Activated CD8-positive, alpha-beta T cell treated with anti-CD3 and anti-CD28 coated beads, Interleukin-2, amount 10 ng/mL, durations not matched to agents 7 days and 5 days (primary cell): ENCODE measurements at regions of chr12 and their contacts with region 1.

Region 1: GRCh38 chr12:104456417-104456949 is at the start of gene CHST11:
- DNase-seq: peak; percentile 81
- ATAC-seq: peak; percentile 71
- H3K4me3 Mint-ChIP-seq: peak within 1 kb of the TSS; percentile 99
- H3K27ac Mint-ChIP-seq: peak within 1 kb of the TSS; percentile 96
- H3K4me1 Mint-ChIP-seq: peaks cover 41% of the 10 kb centered on the region
- H3K27me3 Mint-ChIP-seq: peaks cover 2% of the 10 kb centered on the region
- total RNA-seq, gene CHST11: 82.1 to 85.2 TPM

Region 2: DNA sequence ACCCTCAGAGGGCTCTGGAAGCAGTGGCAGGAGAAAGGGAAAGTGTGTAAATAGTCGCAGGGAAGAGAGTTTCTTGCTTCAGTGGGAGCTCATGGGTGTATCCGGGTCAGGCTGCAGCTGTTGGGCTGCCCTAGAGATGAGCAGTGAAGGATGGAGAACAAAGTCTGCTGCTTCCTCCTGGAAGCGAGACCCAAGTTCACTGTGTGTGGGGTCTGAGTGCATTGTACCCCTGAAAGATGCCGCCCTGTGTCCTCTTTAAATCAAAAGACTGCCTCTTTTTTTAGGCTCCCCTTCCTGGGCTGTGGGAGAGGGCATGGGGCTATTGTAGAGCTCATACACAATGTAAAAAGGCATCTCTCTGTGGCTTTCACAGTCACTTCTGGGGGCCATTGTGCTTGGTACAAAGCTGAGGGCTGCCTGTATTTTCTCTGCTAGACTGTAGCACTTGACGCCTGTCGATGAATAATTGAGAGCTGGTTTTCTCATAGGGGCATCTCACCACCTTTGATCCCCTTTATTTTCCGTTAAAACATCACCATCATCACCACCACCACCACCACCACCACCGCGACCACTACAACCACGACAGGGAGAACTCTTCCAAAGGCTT is 17.0 kb after region 1 on chr12:
- CTCF ChIA-PET with region 1: interaction called, 43 read pairs
- POLR2A ChIA-PET with region 1: interaction called, 68 read pairs
- DNase-seq: peak; percentile 48
- ATAC-seq: peak; percentile 48
- H3K4me3 Mint-ChIP-seq: peak overlapping the region; percentile 69
- H3K27ac Mint-ChIP-seq: peak overlapping the region; percentile 91
- H3K4me1 Mint-ChIP-seq: peaks cover 88% of the 10 kb centered on the region
- H3K27me3 Mint-ChIP-seq: no peaks in the 10 kb centered on the region

Region 3: DNA sequence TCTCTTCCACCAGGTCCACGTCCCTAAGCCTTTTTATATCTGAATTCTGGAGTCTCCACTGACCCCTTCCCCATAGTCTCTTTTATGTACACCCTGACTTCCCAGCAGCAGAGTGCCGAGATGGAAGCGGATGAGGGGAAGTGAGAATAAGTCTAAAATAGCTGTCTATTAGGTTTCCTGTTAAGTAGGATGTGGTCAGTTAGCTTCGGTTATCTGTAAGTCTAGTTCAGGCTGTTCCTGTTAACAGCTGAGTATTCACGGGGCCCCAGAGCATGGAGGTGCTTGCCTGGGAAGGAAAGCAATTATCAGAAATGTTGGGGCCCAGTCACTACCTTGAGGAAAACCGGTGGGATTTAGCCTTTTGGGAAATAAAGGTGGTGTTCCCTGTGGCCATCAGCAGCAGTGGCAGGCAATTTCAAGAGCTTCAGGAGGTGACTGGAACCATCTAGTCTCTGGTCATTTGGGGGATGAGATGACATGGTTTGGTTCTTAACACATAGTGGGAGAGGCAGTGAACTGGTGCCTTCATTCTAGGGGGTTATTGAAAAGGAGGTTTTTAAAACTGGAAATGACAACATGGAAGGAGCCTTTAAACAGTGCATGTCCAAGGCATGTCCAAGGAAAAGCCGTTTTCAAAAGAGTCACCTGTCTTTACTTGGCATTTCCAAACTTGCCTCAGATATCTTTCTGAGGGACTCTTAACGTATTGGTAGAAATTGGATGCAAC is 22.1 kb after region 1 on chr12:
- CTCF ChIA-PET with region 1: interaction called, 43 read pairs
- POLR2A ChIA-PET with region 1: interaction called, 68 read pairs
- DNase-seq: peak; percentile 45
- ATAC-seq: peak; percentile 70
- H3K4me3 Mint-ChIP-seq: peak overlapping the region; percentile 82
- H3K27ac Mint-ChIP-seq: peak overlapping the region; percentile 94
- H3K4me1 Mint-ChIP-seq: peaks cover 89% of the 10 kb centered on the region
- H3K27me3 Mint-ChIP-seq: no peaks in the 10 kb centered on the region

Region 4: DNA sequence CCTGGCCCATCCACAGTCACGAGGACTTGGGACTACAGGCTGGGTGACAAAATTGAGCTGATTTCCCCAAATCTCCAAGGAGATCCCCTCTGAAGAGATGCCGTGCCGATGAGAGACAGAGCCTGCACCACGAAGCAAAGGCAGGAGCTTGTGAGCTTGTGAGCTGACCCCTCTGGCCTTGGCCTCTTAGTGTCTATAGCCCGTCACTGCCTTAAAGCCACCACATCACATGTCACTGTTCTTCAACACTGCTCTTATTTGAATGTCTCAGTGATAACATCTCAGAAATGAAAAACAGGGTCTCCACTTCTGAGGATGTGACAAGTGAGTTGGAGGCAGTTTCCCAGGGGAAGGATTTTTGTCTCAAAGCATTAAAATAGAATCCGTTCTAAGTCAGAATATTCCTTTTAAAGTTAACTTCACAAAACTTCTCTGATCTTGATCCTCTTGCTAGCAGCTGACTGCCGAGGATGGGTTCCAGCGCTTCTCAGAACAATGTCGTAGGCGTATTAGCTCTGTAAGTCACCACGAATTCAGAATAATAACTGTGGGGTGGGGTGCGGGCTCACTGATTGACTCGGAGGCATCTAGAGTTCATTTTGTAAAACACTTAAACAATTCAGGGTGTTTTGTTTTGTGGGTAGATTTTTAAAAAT is 37.8 kb after region 1 on chr12:
- CTCF ChIA-PET with region 1: interaction called, 29 read pairs
- POLR2A ChIA-PET with region 1: interaction called, 9 read pairs
- DNase-seq: peak; percentile 42
- ATAC-seq: peak; percentile 30
- H3K4me3 Mint-ChIP-seq: peak overlapping the region; percentile 63
- H3K27ac Mint-ChIP-seq: peak overlapping the region; percentile 80
- H3K4me1 Mint-ChIP-seq: peaks cover 90% of the 10 kb centered on the region
- H3K27me3 Mint-ChIP-seq: no peaks in the 10 kb centered on the region

Region 5: DNA sequence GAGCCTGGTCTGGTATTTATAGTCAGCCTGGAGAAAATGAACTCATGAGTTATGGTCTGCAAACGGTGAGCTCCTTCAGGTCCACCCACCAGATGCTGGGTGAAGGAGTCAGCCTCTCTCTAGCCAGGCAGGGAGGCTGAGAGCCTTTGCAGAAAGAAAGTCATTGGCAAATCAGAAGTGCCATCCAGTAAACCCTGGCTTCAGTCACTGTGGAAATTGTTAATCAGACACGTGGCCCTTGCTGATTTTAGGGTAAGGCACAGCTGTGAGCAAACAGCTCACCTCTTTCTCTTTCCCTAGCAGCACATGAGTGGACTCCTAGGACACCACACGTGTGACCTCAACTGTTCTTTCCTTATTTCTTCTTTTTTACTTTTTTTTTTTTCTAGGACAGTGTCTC is 45.2 kb after region 1 on chr12:
- CTCF ChIA-PET with region 1: interaction called, 12 read pairs
- POLR2A ChIA-PET with region 1: interaction called, 3 read pairs
- DNase-seq: no peak
- ATAC-seq: peak; percentile 23
- H3K4me3 Mint-ChIP-seq: no peak overlapping the region
- H3K27ac Mint-ChIP-seq: no peak overlapping the region
- H3K4me1 Mint-ChIP-seq: peaks cover 94% of the 10 kb centered on the region
- H3K27me3 Mint-ChIP-seq: no peaks in the 10 kb centered on the region

Region 6: DNA sequence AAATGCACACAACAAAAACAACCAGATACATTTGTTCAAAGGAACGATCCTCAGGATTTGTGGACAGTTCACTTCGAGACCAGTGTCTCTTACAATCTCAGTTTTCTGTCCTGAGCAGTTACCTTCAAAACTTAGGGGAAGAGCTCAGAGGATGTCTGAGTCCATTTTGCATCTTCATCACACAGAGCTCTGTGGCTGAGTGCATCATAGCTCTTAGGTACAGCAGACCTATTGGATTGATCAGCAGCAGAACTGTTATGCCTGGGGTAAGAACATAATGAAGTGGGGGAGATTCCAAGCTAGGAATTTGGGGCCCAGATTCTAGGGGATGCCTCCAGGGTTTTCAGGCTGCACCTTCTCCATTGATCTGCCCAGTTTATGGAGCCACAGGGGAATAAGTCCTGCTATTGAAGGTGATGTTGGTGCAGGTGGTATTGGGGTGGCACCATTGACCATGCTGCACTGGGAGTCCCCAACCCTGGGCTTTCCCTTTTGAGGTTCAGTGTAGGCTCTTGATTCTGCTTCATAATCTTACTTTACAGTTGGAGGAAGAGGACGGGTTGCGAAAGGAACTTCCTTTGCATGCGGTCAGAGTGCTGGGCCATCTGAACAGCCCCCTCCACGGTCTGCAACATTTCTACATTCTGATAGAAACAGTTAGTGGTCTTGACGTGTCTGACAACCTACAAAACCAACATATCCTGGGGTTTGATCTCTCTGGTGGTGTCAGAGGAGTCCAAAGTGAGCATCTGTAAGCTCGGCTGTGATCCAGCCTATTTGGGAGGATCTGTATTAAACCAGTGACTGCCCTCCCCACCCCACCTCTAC is 113.1 kb after region 1 on chr12:
- CTCF ChIA-PET with region 1: interaction called, 37 read pairs
- POLR2A ChIA-PET with region 1: interaction called, 33 read pairs
- DNase-seq: peak; percentile 87
- ATAC-seq: peak; percentile 83
- H3K4me3 Mint-ChIP-seq: peak overlapping the region; percentile 45
- H3K27ac Mint-ChIP-seq: peak overlapping the region; percentile 86
- H3K4me1 Mint-ChIP-seq: peaks cover 71% of the 10 kb centered on the region
- H3K27me3 Mint-ChIP-seq: no peaks in the 10 kb centered on the region

Region 7: GRCh38 chr12:104632724-104633201 is 176.3 kb after region 1 on chr12:
- CTCF ChIA-PET with region 1: no interaction called
- POLR2A ChIA-PET with region 1: no interaction called
- DNase-seq: no peak
- ATAC-seq: no peak
- H3K4me3 Mint-ChIP-seq: no peak overlapping the region
- H3K27ac Mint-ChIP-seq: no peak overlapping the region
- H3K4me1 Mint-ChIP-seq: peaks cover 29% of the 10 kb centered on the region
- H3K27me3 Mint-ChIP-seq: no peaks in the 10 kb centered on the region